Activated naive CD4-positive, alpha-beta T cell treated with anti-CD3 and anti-CD28 coated beads for 36 hours (primary cell): ENCODE measurements at regions of chr5 and their contacts with region 1.

Region 1: DNA sequence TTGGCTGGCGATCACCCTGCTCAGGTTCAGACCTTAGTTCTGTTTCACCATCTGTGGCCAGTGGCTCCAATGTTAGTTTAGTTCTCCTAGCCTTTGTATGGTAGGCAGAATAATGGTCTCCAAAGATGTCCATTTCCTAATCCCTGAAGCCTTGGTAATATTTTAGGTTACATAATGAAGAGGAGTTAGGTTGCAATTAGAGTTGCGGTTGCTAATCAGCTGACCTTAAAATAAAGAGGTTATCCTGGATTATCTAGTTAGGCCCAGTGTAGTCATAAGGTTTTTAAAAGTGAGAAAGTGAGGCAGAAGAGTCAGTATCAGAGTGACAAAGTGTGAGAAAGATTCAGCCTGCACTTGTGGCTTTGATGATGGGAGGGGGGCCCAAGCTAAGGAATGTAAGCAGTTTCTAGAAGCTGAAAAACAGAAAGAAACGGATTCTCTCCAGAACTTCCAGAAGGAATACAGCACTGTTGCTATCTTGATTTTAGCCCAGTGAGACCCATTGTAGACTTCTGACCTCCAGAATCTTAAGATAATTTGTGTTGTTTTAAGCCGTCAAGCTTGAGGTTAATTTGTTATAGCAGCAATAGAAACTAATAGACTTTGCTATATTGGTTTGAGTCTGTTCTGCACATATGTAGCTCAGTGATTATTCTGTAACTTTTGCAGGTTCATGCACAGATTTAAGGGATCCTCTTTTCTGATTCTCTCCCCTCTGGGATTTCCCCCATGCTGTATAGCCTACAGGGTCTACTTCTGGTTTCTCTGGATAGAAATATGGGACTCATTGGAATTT is 21.6 kb downstream of the LNPEP start:
- DNase-seq: peak; percentile 73
- H3K4me3 Mint-ChIP-seq: peak overlapping the region; percentile 64
- H3K27ac Mint-ChIP-seq: peak overlapping the region; percentile 86
- H3K4me1 Mint-ChIP-seq: peaks cover 77% of the 10 kb centered on the region
- H3K27me3 Mint-ChIP-seq: no peaks in the 10 kb centered on the region

Region 2: DNA sequence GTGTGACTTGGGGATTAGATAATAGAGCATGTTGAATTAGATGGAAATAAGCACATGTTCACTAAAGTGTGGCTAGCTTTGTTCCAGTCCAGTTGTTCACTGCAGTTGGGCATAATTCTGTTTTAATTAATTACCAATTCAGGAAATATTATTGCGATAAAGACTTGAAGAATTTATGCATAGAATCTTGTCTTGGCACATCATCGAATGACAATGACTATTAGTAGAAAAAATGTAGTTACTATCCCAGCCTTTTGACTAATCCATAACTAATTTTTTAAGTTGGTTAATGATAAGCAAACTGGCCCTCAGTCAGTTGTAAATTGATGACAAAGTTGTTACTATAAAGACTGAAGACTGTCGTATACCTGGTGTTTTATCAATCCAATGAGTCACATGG is 11.1 kb before region 1 on chr5:
- CTCF ChIA-PET with region 1: no interaction called
- intact Hi-C with region 1: loop called (anchors 1 kb)
- DNase-seq: no peak
- H3K4me3 Mint-ChIP-seq: no peak overlapping the region
- H3K27ac Mint-ChIP-seq: no peak overlapping the region
- H3K4me1 Mint-ChIP-seq: peaks cover 61% of the 10 kb centered on the region
- H3K27me3 Mint-ChIP-seq: no peaks in the 10 kb centered on the region